GM12878 (cell line): ENCODE measurements at regions of chr9 and their contacts with region 1.

Region 1: GRCh38 chr9:70602321-70603019 is 188.0 kb upstream of the KLF9 start:
- DNase-seq: peak; percentile 34
- ATAC-seq: peak; percentile 92
- H3K4me3 ChIP-seq: no peak overlapping the region
- H3K27ac ChIP-seq: no peak overlapping the region
- H3K4me1 ChIP-seq: no peaks in the 10 kb centered on the region
- H3K27me3 ChIP-seq: no peaks in the 10 kb centered on the region; a peak in 1 of 4 replicates
- CTCF ChIP-seq: peak; percentile 56 to 84 (median 84); a peak in 5 of 6 replicates
- EP300 ChIP-seq: no peak
- POLR2A ChIP-seq: no peak
- RAD21 ChIP-seq: peak; percentile 96

Region 2: GRCh38 chr9:70100362-70100761 is 502.1 kb before region 1 on chr9:
- CTCF ChIA-PET with region 1: no interaction called
- POLR2A ChIA-PET with region 1: no interaction called
- RAD21 ChIA-PET with region 1: no interaction called
- SMC1A ChIA-PET with region 1: no interaction called
- in situ Hi-C with region 1: no loop called
- intact Hi-C with region 1: no loop called
- DNase-seq: no peak
- ATAC-seq: no peak
- H3K4me3 ChIP-seq: no peak overlapping the region
- H3K27ac ChIP-seq: no peak overlapping the region
- H3K4me1 ChIP-seq: no peaks in the 10 kb centered on the region
- H3K27me3 ChIP-seq: no peaks in the 10 kb centered on the region
- CTCF ChIP-seq: no peak
- EP300 ChIP-seq: no peak
- POLR2A ChIP-seq: no peak
- RAD21 ChIP-seq: no peak

Region 3: GRCh38 chr9:70111042-70111602 is 491.3 kb before region 1 on chr9:
- CTCF ChIA-PET with region 1: interaction called, 42 read pairs
- POLR2A ChIA-PET with region 1: no interaction called
- RAD21 ChIA-PET with region 1: interaction called, 10 read pairs
- SMC1A ChIA-PET with region 1: interaction called, 16 read pairs
- in situ Hi-C with region 1: no loop called
- intact Hi-C with region 1: loop called (anchors 1 kb)
- DNase-seq: no peak
- ATAC-seq: peak; percentile 91
- H3K4me3 ChIP-seq: no peak overlapping the region
- H3K27ac ChIP-seq: no peak overlapping the region
- H3K4me1 ChIP-seq: no peaks in the 10 kb centered on the region
- H3K27me3 ChIP-seq: no peaks in the 10 kb centered on the region; a peak in 1 of 4 replicates
- CTCF ChIP-seq: peak; percentile 77 to 92 (median 85)
- EP300 ChIP-seq: no peak
- POLR2A ChIP-seq: no peak
- RAD21 ChIP-seq: peak; percentile 57

Region 4: DNA sequence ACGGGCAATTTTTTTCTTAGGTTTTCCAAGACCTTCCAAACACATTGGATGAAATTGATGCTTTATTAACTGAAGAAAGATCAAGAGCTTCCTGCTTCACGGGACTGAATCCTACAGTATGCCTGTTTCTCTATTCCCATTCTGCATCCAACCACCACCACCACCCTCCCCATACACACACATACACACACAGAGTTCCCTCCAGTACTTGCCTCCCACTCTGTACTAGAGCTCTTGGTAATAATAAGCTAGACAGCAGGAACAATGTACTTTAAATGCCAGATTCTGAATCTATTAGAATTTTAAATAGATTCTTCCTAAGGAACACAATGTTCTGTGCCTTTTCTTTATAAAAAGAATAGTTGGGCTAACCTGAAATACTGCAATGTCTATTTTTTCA is 255.4 kb before region 1 on chr9:
- CTCF ChIA-PET with region 1: interaction called, 75 read pairs
- POLR2A ChIA-PET with region 1: no interaction called
- RAD21 ChIA-PET with region 1: interaction called, 14 read pairs
- SMC1A ChIA-PET with region 1: interaction called, 15 read pairs
- in situ Hi-C with region 1: no loop called
- intact Hi-C with region 1: no loop called
- DNase-seq: no peak
- ATAC-seq: no peak
- H3K4me3 ChIP-seq: no peak overlapping the region
- H3K27ac ChIP-seq: no peak overlapping the region
- H3K4me1 ChIP-seq: no peaks in the 10 kb centered on the region
- H3K27me3 ChIP-seq: no peaks in the 10 kb centered on the region
- CTCF ChIP-seq: no peak
- EP300 ChIP-seq: no peak
- POLR2A ChIP-seq: no peak
- RAD21 ChIP-seq: no peak

Region 5: DNA sequence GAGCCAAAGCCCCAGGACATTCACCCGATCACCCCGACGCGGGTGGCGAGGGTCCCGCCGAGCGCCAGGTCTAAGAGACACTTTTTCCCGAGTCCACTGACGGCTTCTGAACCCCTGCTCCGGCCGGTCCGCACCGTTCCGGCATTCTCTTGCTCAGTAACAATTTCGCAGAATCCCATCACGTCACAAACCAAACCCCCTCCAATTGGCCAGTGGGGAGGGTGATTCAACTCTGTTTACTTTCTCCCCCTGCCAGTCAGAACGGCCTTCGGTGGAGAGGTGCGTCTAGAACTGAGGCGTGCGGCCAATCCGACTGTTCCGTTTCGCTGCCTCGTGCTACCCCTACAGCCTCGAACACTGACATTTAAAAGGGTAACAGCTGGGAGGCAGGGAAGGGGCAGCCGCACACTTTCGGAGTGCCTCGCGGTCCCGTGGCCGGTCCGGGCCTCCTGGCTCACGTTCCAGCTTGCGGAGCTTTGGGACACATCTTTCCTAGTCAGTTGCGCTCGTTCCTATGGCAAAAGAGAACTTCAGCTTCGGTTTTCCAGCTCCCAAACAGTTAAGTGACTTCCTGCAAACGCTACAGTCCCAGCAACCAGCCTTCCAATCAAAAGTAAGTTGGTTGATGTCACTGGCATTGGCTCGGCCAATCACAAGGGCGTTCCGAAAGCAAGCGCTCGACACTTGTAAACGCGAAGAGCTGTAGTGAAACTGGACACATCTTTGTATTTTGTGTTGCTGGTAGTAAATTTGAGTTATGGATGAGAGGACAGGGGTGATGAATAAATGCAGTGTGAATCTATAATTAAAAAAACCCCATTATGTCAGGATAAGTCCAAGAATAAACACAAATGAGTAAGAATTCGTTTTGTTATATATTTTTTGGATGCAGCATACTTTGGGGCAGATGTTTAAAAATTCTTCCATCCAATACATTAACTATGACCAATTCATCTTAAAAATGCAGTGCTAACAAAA is 188.4 kb before region 1 on chr9 and contains the start of gene KLF9:
- CTCF ChIA-PET with region 1: interaction called, 9 read pairs
- POLR2A ChIA-PET with region 1: interaction called, 3 read pairs
- RAD21 ChIA-PET with region 1: interaction called, 10 read pairs
- SMC1A ChIA-PET with region 1: interaction called, 7 read pairs
- in situ Hi-C with region 1: no loop called
- intact Hi-C with region 1: loop called (anchors 5 kb)
- DNase-seq: peak; percentile 80
- ATAC-seq: peak; percentile 72
- H3K4me3 ChIP-seq: peak within 1 kb of the TSS; percentile 81
- H3K27ac ChIP-seq: peak within 1 kb of the TSS; percentile 62
- H3K4me1 ChIP-seq: peaks cover 21% of the 10 kb centered on the region
- H3K27me3 ChIP-seq: no peaks in the 10 kb centered on the region
- CTCF ChIP-seq: no peak
- EP300 ChIP-seq: no peak
- POLR2A ChIP-seq: peak; percentile 57; the same call in 1 of the 2 replicates
- RAD21 ChIP-seq: no peak
- polyA plus RNA-seq, gene KLF9: 0.35 to 0.53 TPM

Region 6: GRCh38 chr9:70484210-70485130 is 118.0 kb before region 1 on chr9:
- CTCF ChIA-PET with region 1: interaction called, 13 read pairs
- POLR2A ChIA-PET with region 1: no interaction called
- RAD21 ChIA-PET with region 1: interaction called, 7 read pairs
- SMC1A ChIA-PET with region 1: interaction called, 7 read pairs
- in situ Hi-C with region 1: no loop called
- intact Hi-C with region 1: loop called (anchors 5 kb)
- DNase-seq: no peak
- ATAC-seq: peak; percentile 94
- H3K4me3 ChIP-seq: no peak overlapping the region
- H3K27ac ChIP-seq: no peak overlapping the region
- H3K4me1 ChIP-seq: no peaks in the 10 kb centered on the region
- H3K27me3 ChIP-seq: peaks cover 0 to 4% of the 10 kb centered on the region in 2 experiments; a peak in 1 of 4 replicates
- CTCF ChIP-seq: peak; percentile 43 to 69 (median 65)
- EP300 ChIP-seq: no peak
- POLR2A ChIP-seq: no peak
- RAD21 ChIP-seq: peak; percentile 55

Region 7: GRCh38 chr9:70563431-70564204 is 38.9 kb before region 1 on chr9:
- CTCF ChIA-PET with region 1: interaction called, 7 read pairs
- POLR2A ChIA-PET with region 1: no interaction called
- RAD21 ChIA-PET with region 1: interaction called, 11 read pairs
- SMC1A ChIA-PET with region 1: interaction called, 9 read pairs
- in situ Hi-C with region 1: no loop called
- intact Hi-C with region 1: no loop called
- DNase-seq: peak; percentile 83
- ATAC-seq: peak; percentile 94
- H3K4me3 ChIP-seq: no peak overlapping the region
- H3K27ac ChIP-seq: peak overlapping the region; percentile 67
- H3K4me1 ChIP-seq: peaks cover 15% of the 10 kb centered on the region
- H3K27me3 ChIP-seq: no peaks in the 10 kb centered on the region
- CTCF ChIP-seq: no peak
- EP300 ChIP-seq: peak; percentile 96 to 97
- POLR2A ChIP-seq: no peak
- RAD21 ChIP-seq: no peak